Activated B cell treated with CpG ODN at 0.5 μM for 24 hours (primary cell): ENCODE measurements at regions of chrX and their contacts with region 1.

Region 1: GRCh38 chrX:13101441-13102139 is 57.2 kb upstream of the FAM9C start:
- DNase-seq: no peak
- ATAC-seq: peak; percentile 86
- H3K4me3 Mint-ChIP-seq: peak overlapping the region; percentile 15
- H3K27ac Mint-ChIP-seq: peak overlapping the region; percentile 10
- H3K4me1 Mint-ChIP-seq: peaks cover 29% of the 10 kb centered on the region
- H3K27me3 Mint-ChIP-seq: no peaks in the 10 kb centered on the region
- CTCF ChIP-seq: no peak

Region 2: GRCh38 chrX:13167481-13168231 is 66.1 kb after region 1 on chrX:
- CTCF ChIA-PET with region 1: no interaction called
- POLR2A ChIA-PET with region 1: no interaction called
- intact Hi-C with region 1: loop called (anchors 10 kb)
- DNase-seq: no peak
- ATAC-seq: no peak
- H3K4me3 Mint-ChIP-seq: peak overlapping the region; percentile 52
- H3K27ac Mint-ChIP-seq: peak overlapping the region; percentile 46
- H3K4me1 Mint-ChIP-seq: peaks cover 23% of the 10 kb centered on the region
- H3K27me3 Mint-ChIP-seq: no peaks in the 10 kb centered on the region
- CTCF ChIP-seq: no peak